ENCODE measurements at regions of chr11 and their contacts with region 1.

Region 1: DNA sequence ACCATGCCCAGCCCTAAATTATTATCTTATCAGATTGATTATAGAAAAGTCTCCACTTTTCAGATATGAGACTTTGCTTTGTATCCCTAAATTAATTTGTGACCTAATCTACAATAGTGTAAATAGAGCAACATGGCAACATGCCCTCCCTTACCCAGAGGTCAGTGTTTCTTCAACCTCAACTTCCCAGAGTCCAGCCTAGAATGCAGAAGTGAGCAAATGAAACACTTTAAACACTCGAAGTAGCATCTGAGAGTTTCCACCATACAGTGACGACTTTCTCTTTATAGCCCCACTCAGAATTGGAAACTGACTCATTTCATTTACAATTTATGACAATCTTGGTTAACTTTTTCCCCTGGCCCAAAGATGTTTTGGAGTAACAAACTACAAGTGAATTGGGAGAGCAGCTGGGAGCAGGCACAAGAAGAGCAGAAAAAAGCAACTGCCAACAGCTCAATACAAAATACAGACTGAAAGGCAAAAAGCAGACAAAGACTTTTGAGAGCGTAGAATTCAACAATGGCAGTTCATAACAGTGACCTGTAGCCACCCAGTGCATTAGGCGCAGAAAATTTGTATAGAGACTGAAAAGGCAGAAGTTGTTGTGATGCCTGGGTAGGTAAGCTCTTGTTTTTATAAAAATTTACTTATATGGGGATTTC is 10.1 kb upstream of the BLID start:
- DNase-seq: no peak
- H3K4me3 ChIP-seq: no peak overlapping the region
- H3K4me3 Mint-ChIP-seq: no peak overlapping the region
- H3K27ac Mint-ChIP-seq: no peak overlapping the region
- H3K4me1 ChIP-seq: peaks cover 4% of the 10 kb centered on the region; the same call in 1 of the 2 replicates
- H3K4me1 Mint-ChIP-seq: no peaks in the 10 kb centered on the region
- H3K27me3 ChIP-seq: no peaks in the 10 kb centered on the region
- H3K27me3 Mint-ChIP-seq: peaks cover 9% of the 10 kb centered on the region
- CTCF ChIP-seq: no peak

Region 2: DNA sequence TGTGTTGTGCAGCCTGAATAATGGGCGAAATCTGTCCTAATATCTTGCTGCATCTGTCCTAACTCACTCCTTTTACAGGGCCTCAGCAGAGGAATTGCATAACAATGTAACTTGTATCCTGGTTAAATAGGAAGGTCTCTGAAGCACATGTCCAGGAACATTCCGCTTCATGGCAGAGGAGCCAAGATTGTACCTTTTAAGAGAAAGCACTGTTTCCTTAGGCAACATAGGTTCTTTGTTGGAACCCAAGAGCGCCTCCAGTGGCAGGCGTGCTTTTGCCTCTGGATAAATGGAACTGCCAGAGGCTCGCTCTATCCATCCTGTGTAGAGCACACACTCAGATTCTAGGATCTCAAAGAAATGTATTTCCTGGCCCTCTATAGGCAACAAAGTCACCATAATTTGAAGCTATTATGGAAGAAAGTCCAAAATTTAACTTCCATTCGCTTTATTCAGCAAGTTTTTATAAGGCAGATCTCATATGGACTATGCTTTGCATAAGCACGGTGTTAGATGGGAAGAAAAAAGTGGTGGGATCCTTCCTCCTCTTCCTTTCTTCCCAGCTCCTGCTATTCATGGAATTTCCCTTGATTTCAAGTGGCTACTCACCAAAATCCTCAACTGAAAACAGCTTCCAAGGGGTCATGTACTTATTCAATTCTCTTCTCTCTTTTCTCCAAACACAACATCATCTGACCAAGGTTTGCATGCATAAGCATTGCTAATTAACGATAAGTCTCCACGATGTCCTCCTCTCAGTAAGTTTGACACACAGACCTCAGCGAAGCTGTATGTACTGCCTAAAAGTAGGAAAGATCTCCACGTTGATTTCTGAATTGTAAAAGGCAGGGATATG is 10.4 kb before region 1 on chr11 and contains the start of gene BLID:
- CTCF ChIA-PET with region 1: no interaction called
- POLR2A ChIA-PET with region 1: no interaction called
- intact Hi-C with region 1: loop called (anchors 1 kb)
- DNase-seq: peak; percentile 62 to 65
- H3K4me3 ChIP-seq: no peak within 1 kb of the TSS
- H3K4me3 Mint-ChIP-seq: no peak within 1 kb of the TSS
- H3K27ac Mint-ChIP-seq: no peak within 1 kb of the TSS
- H3K4me1 ChIP-seq: no peaks in the 10 kb centered on the region
- H3K4me1 Mint-ChIP-seq: no peaks in the 10 kb centered on the region
- H3K27me3 ChIP-seq: no peaks in the 10 kb centered on the region
- H3K27me3 Mint-ChIP-seq: peaks cover 24% of the 10 kb centered on the region
- CTCF ChIP-seq: peak; percentile 67 to 89
- total RNA-seq, gene BLID: not detected in 2 replicates